Activated CD4-positive, alpha-beta T cell treated with anti-CD3 and anti-CD28 coated beads, Interleukin-2, amount 10 ng/mL, durations not matched to agents 7 days and 5 days (primary cell): ENCODE measurements at regions of chr1 and their contacts with region 1.

Region 1: DNA sequence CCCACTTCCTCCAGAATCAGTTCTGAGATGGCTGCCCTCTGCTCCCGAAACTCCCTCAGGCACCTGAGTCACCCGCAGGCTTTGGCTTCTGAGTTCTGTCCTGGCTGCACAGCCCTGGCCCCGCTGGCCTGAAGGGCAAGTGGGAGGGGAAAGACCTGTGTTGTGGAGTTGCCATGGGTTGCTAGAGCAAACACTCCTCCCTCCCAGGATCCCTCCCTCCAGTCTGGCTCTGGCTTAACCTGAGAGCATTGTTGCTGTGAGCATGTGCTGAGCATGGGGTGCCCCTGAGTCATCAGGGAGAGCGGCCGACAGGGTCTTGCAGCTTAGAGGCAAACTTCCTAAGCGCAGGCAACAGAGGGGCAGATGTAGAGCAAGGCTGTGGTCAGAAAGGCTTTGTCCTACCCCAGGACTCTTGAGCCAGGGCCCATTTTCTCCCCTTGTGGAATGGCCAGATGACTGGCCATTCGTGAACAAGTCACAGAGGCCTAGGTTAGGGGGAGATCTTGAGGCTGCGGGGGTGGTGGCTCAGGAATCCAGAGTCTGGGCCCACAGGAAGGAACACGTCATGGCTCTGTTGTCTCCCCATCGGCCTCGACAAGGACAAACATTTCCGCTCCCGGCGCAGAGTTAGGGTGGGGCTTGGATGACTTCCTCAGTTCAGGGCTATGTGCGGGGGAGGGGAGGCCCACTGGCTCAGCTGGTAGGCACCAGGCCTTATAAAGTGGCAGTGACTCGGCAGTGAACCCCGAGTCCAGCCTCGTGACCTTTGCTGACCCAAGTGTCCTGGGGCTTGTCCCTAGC is at the start of gene DYNLT4:
- DNase-seq: peak; percentile 95
- H3K4me3 Mint-ChIP-seq: peak within 1 kb of the TSS; percentile 71
- H3K27ac Mint-ChIP-seq: peak within 1 kb of the TSS; percentile 100
- H3K4me1 Mint-ChIP-seq: peaks cover 86% of the 10 kb centered on the region
- H3K27me3 Mint-ChIP-seq: no peaks in the 10 kb centered on the region
- total RNA-seq, gene DYNLT4: 0.47 to 0.83 TPM

Region 2: GRCh38 chr1:44819608-44820327 is 12.3 kb after region 1 on chr1:
- CTCF ChIA-PET with region 1: interaction called, 24 read pairs
- POLR2A ChIA-PET with region 1: interaction called, 40 read pairs
- DNase-seq: peak; percentile 86
- H3K4me3 Mint-ChIP-seq: peak overlapping the region; percentile 87
- H3K27ac Mint-ChIP-seq: peak overlapping the region; percentile 100
- H3K4me1 Mint-ChIP-seq: peaks cover 48% of the 10 kb centered on the region
- H3K27me3 Mint-ChIP-seq: peaks cover 2% of the 10 kb centered on the region